SK-N-SH (cell line): ENCODE measurements at regions of chr6 and their contacts with region 1.

Region 1: GRCh38 chr6:152804150-152804549 is 53.6 kb downstream of the VIP start:
- DNase-seq: no peak
- H3K4me3 ChIP-seq: no peak overlapping the region
- H3K27ac ChIP-seq: no peak overlapping the region
- H3K4me1 ChIP-seq: no peaks in the 10 kb centered on the region
- H3K27me3 ChIP-seq: no peaks in the 10 kb centered on the region
- CTCF ChIP-seq: no peak
- EP300 ChIP-seq: no peak
- RAD21 ChIP-seq: no peak

Region 2: GRCh38 chr6:152815230-152815872 is 11.2 kb after region 1 on chr6:
- CTCF ChIA-PET with region 1: interaction called, 12 read pairs
- POLR2A ChIA-PET with region 1: interaction called, 3 read pairs
- DNase-seq: peak; percentile 52
- H3K4me3 ChIP-seq: no peak overlapping the region
- H3K27ac ChIP-seq: peak overlapping the region in 1 of 2 experiments; percentile 98; a peak in 2 of 4 replicates
- H3K4me1 ChIP-seq: peaks cover 0 to 15% of the 10 kb centered on the region in 2 experiments; a peak in 2 of 4 replicates
- H3K27me3 ChIP-seq: no peaks in the 10 kb centered on the region
- CTCF ChIP-seq: no peak
- EP300 ChIP-seq: peak in 1 of 2 experiments; percentile 95; a peak in 2 of 4 replicates
- RAD21 ChIP-seq: peak; percentile 27; the same call in 1 of the 2 replicates